ENCODE measurements at regions of chr1 and their contacts with region 1.

Region 1: GRCh38 chr1:206663832-206664652 is 20.7 kb upstream of the MAPKAPK2 start:
- DNase-seq: peak; percentile 83
- H3K27ac ChIP-seq: no peak overlapping the region
- CTCF ChIP-seq: peak; percentile 81

Region 2: DNA sequence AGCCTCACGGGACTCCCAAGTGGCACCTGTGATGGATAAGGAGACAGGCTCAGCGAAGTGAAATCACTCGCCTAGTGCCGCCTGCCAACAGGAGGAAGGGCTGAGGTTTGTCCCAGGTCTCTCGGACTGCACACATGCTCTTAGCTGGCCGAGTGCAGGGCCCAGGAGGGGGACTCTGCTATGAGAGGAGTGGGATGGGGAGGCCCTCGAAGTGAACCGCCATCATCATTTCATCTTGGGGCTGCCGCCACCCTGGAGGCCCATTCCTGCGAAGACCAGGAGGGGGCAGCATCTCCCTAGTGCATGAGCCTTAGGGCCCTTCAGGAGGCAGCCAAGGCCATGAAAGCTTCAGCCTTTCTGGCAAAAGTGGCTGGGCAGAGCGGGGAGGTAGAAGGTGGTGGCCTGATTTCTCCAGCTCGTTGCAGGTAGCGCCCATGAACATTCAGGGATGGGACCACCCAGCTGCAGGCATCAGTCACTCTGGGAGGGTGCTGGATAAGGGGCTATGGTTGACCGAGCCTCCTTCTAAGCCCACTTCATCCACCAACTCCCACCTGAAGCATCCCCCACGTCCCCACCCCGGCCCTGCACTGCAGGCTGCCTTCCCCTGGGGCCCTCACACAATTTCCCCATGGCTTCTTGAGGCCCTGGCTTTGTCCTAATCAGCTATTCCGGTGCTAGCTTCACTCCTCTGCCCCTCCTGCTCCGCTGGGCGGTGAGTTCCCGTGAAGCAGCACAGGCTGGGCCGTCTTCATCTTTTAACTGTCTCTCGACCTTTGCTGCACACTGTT is 173.9 kb before region 1 on chr1:
- CTCF ChIA-PET with region 1: interaction called, 45 read pairs
- POLR2A ChIA-PET with region 1: no interaction called
- DNase-seq: peak; percentile 93
- H3K27ac ChIP-seq: no peak overlapping the region
- CTCF ChIP-seq: peak; percentile 95

Region 3: DNA sequence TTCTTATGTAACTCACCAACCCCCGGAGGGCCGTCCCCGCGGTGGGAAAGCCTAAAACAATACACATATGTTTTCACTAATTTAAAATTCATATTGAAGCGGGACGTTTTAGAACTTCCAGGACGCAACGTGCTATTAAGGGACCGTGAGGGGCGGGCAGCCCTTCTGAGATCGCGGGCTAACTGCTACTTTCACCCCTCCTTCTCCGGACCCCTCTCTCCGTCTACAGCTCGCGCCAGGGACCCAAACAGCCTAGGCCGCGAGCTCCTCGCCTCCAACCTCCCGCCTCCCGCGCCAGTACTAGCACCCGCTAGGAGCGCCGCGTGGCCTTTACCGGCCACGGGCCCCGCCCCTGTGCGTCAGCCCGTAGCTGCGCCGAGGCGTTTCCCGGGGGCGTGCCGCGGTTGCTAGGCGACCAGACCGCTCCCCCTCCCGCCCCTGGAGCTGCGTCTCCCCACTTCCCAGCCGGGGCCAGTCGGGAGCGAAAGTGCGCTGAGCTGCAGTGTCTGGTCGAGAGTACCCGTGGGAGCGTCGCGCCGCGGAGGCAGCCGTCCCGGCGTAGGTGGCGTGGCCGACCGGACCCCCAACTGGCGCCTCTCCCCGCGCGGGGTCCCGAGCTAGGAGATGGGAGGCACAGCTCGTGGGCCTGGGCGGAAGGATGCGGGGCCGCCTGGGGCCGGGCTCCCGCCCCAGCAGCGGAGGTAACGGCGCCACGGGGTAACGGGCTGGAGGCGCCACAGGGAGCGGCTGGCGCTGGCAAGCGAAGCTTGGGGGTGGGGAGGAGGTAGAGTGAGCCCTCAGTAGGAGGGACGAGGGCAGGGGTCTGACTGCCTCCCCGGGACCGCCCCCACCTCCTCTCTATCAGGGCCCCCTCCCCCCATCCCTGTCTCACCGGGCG is 28.7 kb before region 1 on chr1 and contains the start of gene DYRK3:
- CTCF ChIA-PET with region 1: interaction called, 44 read pairs
- POLR2A ChIA-PET with region 1: interaction called, 16 read pairs
- DNase-seq: peak; percentile 99
- H3K27ac ChIP-seq: peak within 1 kb of the TSS; percentile 89
- CTCF ChIP-seq: no peak

Region 4: GRCh38 chr1:206674745-206675175 is 10.7 kb after region 1 on chr1:
- CTCF ChIA-PET with region 1: interaction called, 34 read pairs
- POLR2A ChIA-PET with region 1: no interaction called
- DNase-seq: peak; percentile 95
- H3K27ac ChIP-seq: peak overlapping the region; percentile 84
- CTCF ChIP-seq: no peak

Region 5: DNA sequence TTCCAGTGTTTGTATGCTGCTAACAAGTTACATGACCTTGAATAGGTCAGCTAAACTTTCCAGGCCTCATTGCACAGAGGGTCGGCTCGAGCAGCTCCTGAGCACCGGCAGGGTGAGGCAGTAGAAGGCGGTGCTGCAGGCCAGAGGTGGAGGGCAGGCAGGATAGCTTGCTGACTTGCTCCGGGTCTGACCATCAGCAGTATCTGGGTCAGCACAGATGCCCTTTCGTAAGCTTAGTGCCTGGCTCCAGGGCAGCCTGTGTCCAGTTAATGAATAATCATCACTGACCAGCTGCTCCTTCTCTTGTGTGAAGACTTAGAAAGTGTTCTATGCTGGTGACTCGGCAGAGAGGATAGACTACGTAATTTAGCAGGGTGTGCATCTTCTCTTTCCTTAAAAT is 27.6 kb after region 1 on chr1:
- CTCF ChIA-PET with region 1: interaction called, 15 read pairs
- POLR2A ChIA-PET with region 1: interaction called, 3 read pairs
- DNase-seq: no peak
- H3K27ac ChIP-seq: no peak overlapping the region
- CTCF ChIP-seq: no peak